ENCODE measurements at regions of chr3 and their contacts with region 1.

Region 1: GRCh38 chr3:142723968-142724681 is at the start of gene TRPC1:
- DNase-seq: peak; percentile 80 to 89
- ATAC-seq: peak; percentile 93
- H3K4me3 ChIP-seq: peak within 1 kb of the TSS; percentile 91 to 95
- H3K27ac ChIP-seq: peak within 1 kb of the TSS; percentile 20 to 98
- H3K4me1 ChIP-seq: no peaks in the 10 kb centered on the region
- H3K27me3 ChIP-seq: no peaks in the 10 kb centered on the region
- total RNA-seq, gene TRPC1: 25.5 to 29.2 TPM

Region 2: GRCh38 chr3:142447852-142448823 is 276.0 kb before region 1 on chr3 and contains the start of gene XRN1:
- intact Hi-C with region 1: loop called in 1 of 2 experiments (anchors 5 kb)
- DNase-seq: peak; percentile 98 to 99
- ATAC-seq: peak; percentile 100
- H3K4me3 ChIP-seq: peak within 1 kb of the TSS; percentile 94 to 98
- H3K27ac ChIP-seq: peak within 1 kb of the TSS; percentile 51 to 92
- H3K4me1 ChIP-seq: peaks cover 3 to 8% of the 10 kb centered on the region in 2 donors
- H3K27me3 ChIP-seq: no peaks in the 10 kb centered on the region
- total RNA-seq, gene XRN1: 50.9 to 71.8 TPM

Region 3: DNA sequence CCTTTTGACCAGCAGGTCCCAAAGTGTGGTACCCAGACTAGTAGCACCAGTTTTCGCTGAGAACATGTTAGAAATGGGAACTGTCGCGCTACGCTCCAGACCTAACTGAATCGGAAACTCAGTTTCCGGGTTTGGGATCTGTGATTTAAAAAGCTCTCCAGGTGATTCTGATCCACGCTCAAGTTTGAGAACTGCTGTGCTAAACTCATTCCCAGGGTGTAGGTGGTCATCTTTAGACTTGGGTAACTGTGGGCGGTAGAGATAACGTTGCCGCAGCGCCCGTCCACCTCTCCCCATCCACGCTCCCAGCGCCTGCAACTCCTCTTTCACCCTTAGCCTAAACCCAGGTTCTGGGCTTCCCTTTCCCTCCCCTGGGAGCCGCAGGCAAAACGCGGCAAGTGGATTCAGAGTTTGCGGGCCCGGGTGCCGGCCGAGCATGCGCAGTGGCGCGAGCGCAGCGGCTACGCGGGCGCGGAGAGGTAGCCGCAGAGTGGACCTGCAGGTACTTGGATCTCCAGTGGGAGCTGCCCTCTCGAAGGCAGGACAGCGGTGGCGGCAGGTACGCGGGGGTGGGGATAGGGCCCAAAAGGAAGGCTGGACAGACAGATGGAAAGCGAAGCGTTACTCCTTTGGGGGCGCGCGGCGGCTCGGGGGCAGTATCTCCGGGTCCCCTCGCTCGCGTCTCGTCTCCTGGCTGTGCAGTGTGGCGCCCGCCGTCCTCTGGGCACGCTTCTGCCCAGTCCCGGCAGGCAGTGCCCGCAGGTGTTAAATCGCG is 128.0 kb before region 1 on chr3 and contains the start of gene PLS1:
- intact Hi-C with region 1: loop called in 1 of 2 experiments (anchors 5 kb)
- DNase-seq: peak; percentile 86 to 93
- ATAC-seq: peak; percentile 94
- H3K4me3 ChIP-seq: peak within 1 kb of the TSS; percentile 15 to 56
- H3K27ac ChIP-seq: peak within 1 kb of the TSS in 1 of 2 donors; percentile 40
- H3K4me1 ChIP-seq: no peaks in the 10 kb centered on the region
- H3K27me3 ChIP-seq: no peaks in the 10 kb centered on the region
- total RNA-seq, gene PLS1: 0.97 to 1.0 TPM

Measured in aorta (tissue), 5 donors.